Panc1 (cell line): ENCODE measurements at regions of chr1 and their contacts with region 1.

Region 1: GRCh38 chr1:247681288-247681897 is 1.9 kb upstream of the OR13G1 start:
- DNase-seq: peak; percentile 46
- ATAC-seq: peak; percentile 78; the same call in 1 of the 2 replicates
- H3K4me3 ChIP-seq: no peak overlapping the region
- H3K27ac ChIP-seq: no peak overlapping the region
- H3K4me1 ChIP-seq: no peaks in the 10 kb centered on the region
- H3K27me3 ChIP-seq: no peaks in the 10 kb centered on the region
- CTCF ChIP-seq: peak; percentile 85

Region 2: GRCh38 chr1:247884797-247885413 is 203.5 kb after region 1 on chr1:
- CTCF ChIA-PET with region 1: no interaction called
- POLR2A ChIA-PET with region 1: no interaction called
- in situ Hi-C with region 1: no loop called
- intact Hi-C with region 1: no loop called
- DNase-seq: no peak
- ATAC-seq: no peak
- H3K4me3 ChIP-seq: no peak overlapping the region
- H3K27ac ChIP-seq: no peak overlapping the region
- H3K4me1 ChIP-seq: no peaks in the 10 kb centered on the region
- H3K27me3 ChIP-seq: no peaks in the 10 kb centered on the region
- CTCF ChIP-seq: no peak

Region 3: GRCh38 chr1:248239478-248239877 is 558.1 kb after region 1 on chr1:
- CTCF ChIA-PET with region 1: no interaction called
- POLR2A ChIA-PET with region 1: no interaction called
- in situ Hi-C with region 1: no loop called
- intact Hi-C with region 1: loop called (anchors 10 kb)
- DNase-seq: no peak
- ATAC-seq: no peak
- H3K4me3 ChIP-seq: no peak overlapping the region
- H3K27ac ChIP-seq: no peak overlapping the region
- H3K4me1 ChIP-seq: no peaks in the 10 kb centered on the region
- H3K27me3 ChIP-seq: no peaks in the 10 kb centered on the region
- CTCF ChIP-seq: no peak